ENCODE measurements at regions of chr1 and their contacts with region 1.

Region 1: DNA sequence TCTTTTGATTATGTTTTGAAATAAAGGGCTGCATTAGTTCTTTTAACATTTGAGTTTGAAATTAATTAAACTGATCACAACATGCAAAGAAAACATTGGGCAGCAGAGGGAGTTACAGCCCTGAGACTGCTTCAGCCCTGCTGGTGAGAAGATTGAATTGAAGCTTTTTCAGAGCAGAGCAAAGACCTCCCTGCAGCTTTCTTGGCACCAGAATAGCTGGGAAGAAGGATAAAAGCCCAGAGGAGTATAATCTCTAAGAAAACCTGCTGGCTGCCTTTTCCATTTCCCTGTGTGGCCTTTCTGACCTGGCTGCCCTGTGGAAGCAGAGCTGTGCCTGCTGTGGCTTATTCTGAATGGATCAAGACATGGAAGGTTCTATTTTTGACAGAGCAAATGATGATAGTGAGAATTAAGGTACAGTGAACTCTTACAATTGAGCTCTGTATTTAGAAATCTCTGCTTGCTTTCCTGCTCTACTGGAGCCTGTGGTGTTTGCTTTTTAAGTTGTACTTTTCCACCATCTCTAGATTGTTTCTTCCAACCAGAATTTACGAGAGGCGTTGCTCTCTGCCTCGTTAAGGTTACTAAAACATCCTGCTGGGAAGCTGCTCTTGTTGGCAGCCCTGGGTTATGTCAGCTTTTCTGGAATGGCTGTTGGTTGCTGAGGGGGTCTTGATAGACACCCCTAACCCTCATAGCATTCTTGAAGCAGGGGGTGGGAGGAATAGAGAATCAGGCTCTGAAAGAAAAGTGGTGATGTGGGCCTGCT is 9.9 kb downstream of the SNRPE start:
- DNase-seq: no peak
- ATAC-seq: peak; percentile 72 to 76
- H3K4me3 ChIP-seq: no peak overlapping the region
- H3K27ac ChIP-seq: no peak overlapping the region
- H3K4me1 ChIP-seq: no peaks in the 10 kb centered on the region
- H3K27me3 ChIP-seq: no peaks in the 10 kb centered on the region
- CTCF ChIP-seq: peak; percentile 63

Region 2: GRCh38 chr1:204128964-204129896 is 257.9 kb after region 1 on chr1:
- intact Hi-C with region 1: loop called (anchors 5 kb)
- DNase-seq: peak; percentile 85
- ATAC-seq: peak; percentile 93 to 94
- H3K4me3 ChIP-seq: peak overlapping the region; percentile 37
- H3K27ac ChIP-seq: peak overlapping the region; percentile 27
- H3K4me1 ChIP-seq: peaks cover 34% of the 10 kb centered on the region
- H3K27me3 ChIP-seq: no peaks in the 10 kb centered on the region
- CTCF ChIP-seq: peak; percentile 92

Measured in lower lobe of right lung (tissue), 2 donors.